CD4-positive, alpha-beta T cell (primary cell): ENCODE measurements at regions of chr11 and their contacts with region 1.

Region 1: DNA sequence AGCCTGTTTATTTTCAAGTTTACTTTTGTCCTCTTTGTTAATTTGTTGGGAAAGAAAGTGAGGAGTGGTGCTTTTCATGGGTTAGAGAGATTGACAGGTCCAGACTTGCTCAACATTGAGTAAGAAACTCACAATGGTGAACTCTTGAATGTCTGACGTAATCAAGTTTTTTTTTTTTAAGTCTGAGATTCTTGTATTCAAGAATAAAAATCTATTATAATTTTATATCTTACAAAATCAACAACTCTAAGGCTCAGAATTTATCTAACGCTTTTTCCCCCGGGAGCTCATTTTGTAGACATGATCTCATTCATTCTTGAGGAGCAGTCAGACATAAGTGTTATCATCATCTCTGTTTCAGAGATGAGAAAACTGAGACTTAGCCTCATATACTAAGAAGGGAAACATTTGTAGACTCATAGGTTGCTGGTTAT is 39.1 kb upstream of the SPTBN2 start:
- DNase-seq: no peak
- ATAC-seq: no peak
- H3K4me3 ChIP-seq: no peak overlapping the region
- H3K4me3 Mint-ChIP-seq: no peak overlapping the region
- H3K27ac ChIP-seq: no peak overlapping the region
- H3K27ac Mint-ChIP-seq: no peak overlapping the region
- H3K4me1 ChIP-seq: no peaks in the 10 kb centered on the region
- H3K4me1 Mint-ChIP-seq: no peaks in the 10 kb centered on the region
- H3K27me3 ChIP-seq: no peaks in the 10 kb centered on the region
- H3K27me3 Mint-ChIP-seq: no peaks in the 10 kb centered on the region
- CTCF ChIP-seq: no peak

Region 2: GRCh38 chr11:66782724-66783123 is 14.6 kb after region 1 on chr11:
- CTCF ChIA-PET with region 1: no interaction called
- POLR2A ChIA-PET with region 1: no interaction called
- intact Hi-C with region 1: no loop called
- DNase-seq: no peak
- ATAC-seq: no peak
- H3K4me3 ChIP-seq: no peak overlapping the region
- H3K4me3 Mint-ChIP-seq: no peak overlapping the region
- H3K27ac ChIP-seq: no peak overlapping the region
- H3K27ac Mint-ChIP-seq: no peak overlapping the region
- H3K4me1 ChIP-seq: no peaks in the 10 kb centered on the region
- H3K4me1 Mint-ChIP-seq: no peaks in the 10 kb centered on the region
- H3K27me3 ChIP-seq: no peaks in the 10 kb centered on the region
- H3K27me3 Mint-ChIP-seq: no peaks in the 10 kb centered on the region
- CTCF ChIP-seq: no peak

Region 3: GRCh38 chr11:66820381-66820780 is 52.3 kb after region 1 on chr11:
- CTCF ChIA-PET with region 1: no interaction called
- POLR2A ChIA-PET with region 1: no interaction called
- intact Hi-C with region 1: loop called in 1 of 2 experiments (anchors 5 kb)
- DNase-seq: no peak
- ATAC-seq: no peak
- H3K4me3 ChIP-seq: no peak overlapping the region
- H3K4me3 Mint-ChIP-seq: no peak overlapping the region
- H3K27ac ChIP-seq: no peak overlapping the region
- H3K27ac Mint-ChIP-seq: no peak overlapping the region
- H3K4me1 ChIP-seq: no peaks in the 10 kb centered on the region
- H3K4me1 Mint-ChIP-seq: no peaks in the 10 kb centered on the region
- H3K27me3 ChIP-seq: no peaks in the 10 kb centered on the region
- H3K27me3 Mint-ChIP-seq: no peaks in the 10 kb centered on the region
- CTCF ChIP-seq: no peak